CD4-positive, alpha-beta T cell (primary cell): ENCODE measurements at regions of chr6 and their contacts with region 1.

Region 1: DNA sequence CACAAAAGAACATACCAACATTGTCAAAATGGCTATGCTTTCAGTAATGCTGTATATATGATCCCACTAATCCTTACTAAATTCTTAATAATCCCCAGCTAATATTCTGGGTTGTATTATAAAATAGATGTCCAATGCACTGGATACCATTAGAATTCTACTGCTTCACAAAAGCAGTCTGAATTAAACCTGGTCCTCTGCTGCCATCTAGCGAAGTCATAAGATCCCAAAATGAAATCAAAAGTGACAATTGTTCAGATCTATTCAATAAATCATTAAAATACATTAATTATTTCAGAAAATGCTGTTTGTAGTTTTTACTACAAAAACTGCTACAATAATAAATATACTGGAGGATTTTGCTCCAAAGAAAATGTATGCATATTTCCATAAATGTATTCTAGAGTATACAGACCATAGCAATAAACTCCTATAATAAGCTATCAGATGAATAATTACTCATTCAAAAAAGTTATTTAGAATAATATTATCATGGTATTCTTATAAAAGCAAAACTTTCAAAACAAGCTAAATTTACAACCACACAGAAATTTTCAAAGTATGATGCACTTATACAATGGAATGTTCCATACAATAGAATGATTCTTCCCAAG is 92.6 kb downstream of the RNGTT start:
- DNase-seq: peak in 11 of 14 experiments; percentile 5 to 78 (median 25)
- ATAC-seq: no peak
- H3K4me3 ChIP-seq: no peak overlapping the region
- H3K4me3 Mint-ChIP-seq: no peak overlapping the region
- H3K27ac ChIP-seq: no peak overlapping the region
- H3K27ac Mint-ChIP-seq: no peak overlapping the region
- H3K4me1 ChIP-seq: no peaks in the 10 kb centered on the region
- H3K4me1 Mint-ChIP-seq: peaks cover 15% of the 10 kb centered on the region
- H3K27me3 ChIP-seq: no peaks in the 10 kb centered on the region
- H3K27me3 Mint-ChIP-seq: no peaks in the 10 kb centered on the region
- CTCF ChIP-seq: peak; percentile 78

Region 2: GRCh38 chr6:87066449-87067333 is 1804.1 kb before region 1 on chr6:
- CTCF ChIA-PET with region 1: no interaction called
- POLR2A ChIA-PET with region 1: no interaction called
- intact Hi-C with region 1: loop called in 1 of 2 experiments (anchors 2 kb)
- DNase-seq: peak in 10 of 14 experiments; percentile 3 to 66 (median 8)
- ATAC-seq: no peak
- H3K4me3 ChIP-seq: no peak overlapping the region
- H3K4me3 Mint-ChIP-seq: peak overlapping the region; percentile 17
- H3K27ac ChIP-seq: no peak overlapping the region
- H3K27ac Mint-ChIP-seq: no peak overlapping the region
- H3K4me1 ChIP-seq: no peaks in the 10 kb centered on the region
- H3K4me1 Mint-ChIP-seq: no peaks in the 10 kb centered on the region
- H3K27me3 ChIP-seq: peaks cover 0 to 7% of the 10 kb centered on the region in 2 experiments
- H3K27me3 Mint-ChIP-seq: peaks cover 26% of the 10 kb centered on the region
- CTCF ChIP-seq: peak; percentile 34

Region 3: GRCh38 chr6:87139236-87139635 is 1731.6 kb before region 1 on chr6:
- CTCF ChIA-PET with region 1: interaction called, 4 read pairs
- POLR2A ChIA-PET with region 1: no interaction called
- intact Hi-C with region 1: loop called in 1 of 2 experiments (anchors 5 kb)
- DNase-seq: peak in 8 of 14 experiments; percentile 16 to 82 (median 54)
- ATAC-seq: peak; percentile 85
- H3K4me3 ChIP-seq: no peak overlapping the region
- H3K4me3 Mint-ChIP-seq: no peak overlapping the region
- H3K27ac ChIP-seq: no peak overlapping the region
- H3K27ac Mint-ChIP-seq: no peak overlapping the region
- H3K4me1 ChIP-seq: no peaks in the 10 kb centered on the region
- H3K4me1 Mint-ChIP-seq: peaks cover 5% of the 10 kb centered on the region
- H3K27me3 ChIP-seq: no peaks in the 10 kb centered on the region
- H3K27me3 Mint-ChIP-seq: peaks cover 13% of the 10 kb centered on the region
- CTCF ChIP-seq: peak; percentile 83

Region 4: GRCh38 chr6:87832025-87832825 is 1038.6 kb before region 1 on chr6:
- CTCF ChIA-PET with region 1: no interaction called
- POLR2A ChIA-PET with region 1: interaction called, 5 read pairs
- intact Hi-C with region 1: loop called (anchors 5 kb)
- DNase-seq: peak in 4 of 14 experiments; percentile 5 to 54 (median 48)
- ATAC-seq: peak; percentile 61
- H3K4me3 ChIP-seq: peak overlapping the region; percentile 60
- H3K4me3 Mint-ChIP-seq: peak overlapping the region; percentile 90
- H3K27ac ChIP-seq: peak overlapping the region in 1 of 2 donors; percentile 67
- H3K27ac Mint-ChIP-seq: peak overlapping the region; percentile 74
- H3K4me1 ChIP-seq: peaks cover 5% of the 10 kb centered on the region
- H3K4me1 Mint-ChIP-seq: peaks cover 13% of the 10 kb centered on the region
- H3K27me3 ChIP-seq: no peaks in the 10 kb centered on the region
- H3K27me3 Mint-ChIP-seq: no peaks in the 10 kb centered on the region
- CTCF ChIP-seq: peak; percentile 49

Region 5: GRCh38 chr6:87929843-87930288 is 941.0 kb before region 1 on chr6:
- CTCF ChIA-PET with region 1: no interaction called
- POLR2A ChIA-PET with region 1: no interaction called
- intact Hi-C with region 1: loop called (anchors 1 kb)
- DNase-seq: peak; percentile 16 to 74 (median 45)
- ATAC-seq: peak; percentile 75
- H3K4me3 ChIP-seq: no peak overlapping the region
- H3K4me3 Mint-ChIP-seq: no peak overlapping the region
- H3K27ac ChIP-seq: no peak overlapping the region
- H3K27ac Mint-ChIP-seq: no peak overlapping the region
- H3K4me1 ChIP-seq: peaks cover 3% of the 10 kb centered on the region
- H3K4me1 Mint-ChIP-seq: no peaks in the 10 kb centered on the region
- H3K27me3 ChIP-seq: no peaks in the 10 kb centered on the region
- H3K27me3 Mint-ChIP-seq: no peaks in the 10 kb centered on the region
- CTCF ChIP-seq: peak; percentile 64

Region 6: DNA sequence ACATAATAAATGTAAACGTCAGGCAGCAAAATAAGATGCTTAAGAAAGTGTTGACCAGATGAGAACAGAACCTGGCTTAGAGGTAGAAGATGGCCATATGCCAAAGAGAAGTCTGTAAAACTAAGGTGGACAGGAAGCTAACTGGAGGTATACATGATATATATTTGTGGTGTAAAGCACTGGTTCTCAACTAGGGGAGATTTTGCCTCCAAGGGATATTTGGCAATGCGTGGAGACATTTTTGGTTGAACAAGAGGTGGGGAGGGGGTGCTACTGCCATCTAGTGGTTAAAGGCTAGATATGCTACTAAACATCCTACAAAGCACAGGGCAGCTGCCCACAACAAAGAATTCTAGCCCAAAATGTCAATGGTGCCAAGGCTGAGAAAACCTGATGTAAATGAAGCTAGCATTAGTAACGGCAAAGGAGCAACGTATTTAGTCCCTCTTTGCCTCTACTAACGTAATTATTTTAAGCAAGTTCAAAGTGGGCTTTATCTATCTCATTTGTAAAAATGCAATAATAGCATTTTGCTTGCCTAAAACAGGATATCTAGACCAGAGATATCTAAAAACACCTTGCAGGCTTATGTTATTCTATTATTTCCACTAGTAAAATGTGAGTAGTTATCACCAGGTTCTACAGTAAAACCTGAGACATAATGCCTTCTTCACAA is 90.0 kb before region 1 on chr6:
- CTCF ChIA-PET with region 1: no interaction called
- POLR2A ChIA-PET with region 1: no interaction called
- intact Hi-C with region 1: loop called in 1 of 2 experiments (anchors 5 kb)
- DNase-seq: peak in 13 of 14 experiments; percentile 2 to 77 (median 22)
- ATAC-seq: peak; percentile 80
- H3K4me3 ChIP-seq: no peak overlapping the region
- H3K4me3 Mint-ChIP-seq: no peak overlapping the region
- H3K27ac ChIP-seq: no peak overlapping the region
- H3K27ac Mint-ChIP-seq: no peak overlapping the region
- H3K4me1 ChIP-seq: no peaks in the 10 kb centered on the region
- H3K4me1 Mint-ChIP-seq: peaks cover 4% of the 10 kb centered on the region
- H3K27me3 ChIP-seq: no peaks in the 10 kb centered on the region
- H3K27me3 Mint-ChIP-seq: no peaks in the 10 kb centered on the region
- CTCF ChIP-seq: peak; percentile 90

Region 7: GRCh38 chr6:88910922-88911778 is 40.3 kb after region 1 on chr6:
- CTCF ChIA-PET with region 1: no interaction called
- POLR2A ChIA-PET with region 1: no interaction called
- intact Hi-C with region 1: no loop called
- DNase-seq: no peak
- ATAC-seq: no peak
- H3K4me3 ChIP-seq: no peak overlapping the region
- H3K4me3 Mint-ChIP-seq: no peak overlapping the region
- H3K27ac ChIP-seq: no peak overlapping the region
- H3K27ac Mint-ChIP-seq: no peak overlapping the region
- H3K4me1 ChIP-seq: peaks cover 10% of the 10 kb centered on the region
- H3K4me1 Mint-ChIP-seq: peaks cover 76% of the 10 kb centered on the region
- H3K27me3 ChIP-seq: no peaks in the 10 kb centered on the region
- H3K27me3 Mint-ChIP-seq: no peaks in the 10 kb centered on the region
- CTCF ChIP-seq: no peak